AG04449 (cell line): ENCODE measurements at regions of chr3 and their contacts with region 1.

Region 1: DNA sequence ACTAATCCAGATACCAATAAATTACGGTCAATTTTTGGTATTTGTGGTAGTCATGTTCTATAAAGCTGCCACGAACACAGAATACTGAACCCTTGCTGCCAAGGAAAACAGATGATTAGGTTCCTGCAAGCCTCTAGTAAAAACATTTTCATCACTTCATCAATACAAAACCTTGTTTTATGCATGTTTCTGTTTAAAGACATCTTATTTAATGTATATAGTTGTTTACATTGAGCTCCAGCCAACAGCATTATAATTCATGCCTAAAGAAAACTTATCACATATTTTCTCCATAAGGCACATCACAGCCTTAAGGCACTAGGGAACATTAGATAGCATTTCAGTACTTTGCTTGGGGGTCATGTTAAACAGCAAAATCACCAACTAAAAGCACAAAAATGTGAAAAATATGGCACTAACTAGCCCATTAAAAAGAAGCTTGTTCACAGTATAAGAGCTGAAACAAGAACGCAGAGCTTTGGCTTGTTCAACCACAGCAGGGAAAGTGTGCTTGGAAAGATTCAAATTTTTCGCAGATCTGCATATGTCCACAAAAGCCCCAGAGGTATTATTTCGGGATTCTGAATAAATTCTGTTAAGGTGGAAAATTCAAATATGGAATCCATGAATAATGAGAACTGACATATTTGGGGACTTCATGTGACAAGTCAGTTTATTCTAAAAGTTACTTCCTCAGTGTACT is 27.7 kb downstream of the POLQ start:
- DNase-seq: no peak
- H3K4me3 ChIP-seq: no peak overlapping the region
- CTCF ChIP-seq: no peak

Region 2: DNA sequence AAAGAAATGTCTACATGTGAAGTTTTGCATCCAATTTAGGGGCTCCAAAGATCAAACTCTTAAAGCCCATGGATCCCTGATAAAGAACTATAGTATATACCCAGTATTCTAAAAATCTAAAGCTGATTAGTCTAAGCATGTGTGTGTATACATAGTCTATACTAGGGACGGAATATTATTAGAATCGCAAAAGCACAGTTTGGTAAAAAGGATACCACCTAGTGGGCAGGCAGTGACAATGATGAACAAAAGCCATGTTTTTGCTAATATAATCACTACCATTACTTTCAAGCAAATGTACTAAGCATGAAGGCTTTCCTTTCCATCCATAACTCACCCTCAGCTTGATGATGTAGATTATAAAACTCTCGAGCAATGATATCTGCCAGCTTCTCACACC is 11.2 kb after region 1 on chr3:
- CTCF ChIA-PET with region 1: interaction called, 14 read pairs
- POLR2A ChIA-PET with region 1: no interaction called
- DNase-seq: no peak
- H3K4me3 ChIP-seq: no peak overlapping the region
- CTCF ChIP-seq: peak; percentile 53